Activated CD8-positive, alpha-beta T cell treated with anti-CD3 and anti-CD28 coated beads for 36 hours (primary cell): ENCODE measurements at regions of chr5 and their contacts with region 1.

Region 1: GRCh38 chr5:38441453-38442246 is 114.8 kb downstream of the LIFR start:
- DNase-seq: peak; percentile 91
- ATAC-seq: peak; percentile 100
- H3K4me3 Mint-ChIP-seq: no peak overlapping the region
- H3K27ac Mint-ChIP-seq: no peak overlapping the region
- H3K4me1 Mint-ChIP-seq: no peaks in the 10 kb centered on the region
- H3K27me3 Mint-ChIP-seq: peaks cover 42% of the 10 kb centered on the region
- CTCF ChIP-seq: peak; percentile 90

Region 2: GRCh38 chr5:38453506-38453905 is 11.9 kb after region 1 on chr5:
- CTCF ChIA-PET with region 1: interaction called, 39 read pairs
- POLR2A ChIA-PET with region 1: no interaction called
- intact Hi-C with region 1: no loop called
- DNase-seq: peak; percentile 74
- ATAC-seq: peak; percentile 96
- H3K4me3 Mint-ChIP-seq: no peak overlapping the region
- H3K27ac Mint-ChIP-seq: peak overlapping the region; percentile 31
- H3K4me1 Mint-ChIP-seq: peaks cover 27% of the 10 kb centered on the region
- H3K27me3 Mint-ChIP-seq: peaks cover 71% of the 10 kb centered on the region
- CTCF ChIP-seq: no peak

Region 3: DNA sequence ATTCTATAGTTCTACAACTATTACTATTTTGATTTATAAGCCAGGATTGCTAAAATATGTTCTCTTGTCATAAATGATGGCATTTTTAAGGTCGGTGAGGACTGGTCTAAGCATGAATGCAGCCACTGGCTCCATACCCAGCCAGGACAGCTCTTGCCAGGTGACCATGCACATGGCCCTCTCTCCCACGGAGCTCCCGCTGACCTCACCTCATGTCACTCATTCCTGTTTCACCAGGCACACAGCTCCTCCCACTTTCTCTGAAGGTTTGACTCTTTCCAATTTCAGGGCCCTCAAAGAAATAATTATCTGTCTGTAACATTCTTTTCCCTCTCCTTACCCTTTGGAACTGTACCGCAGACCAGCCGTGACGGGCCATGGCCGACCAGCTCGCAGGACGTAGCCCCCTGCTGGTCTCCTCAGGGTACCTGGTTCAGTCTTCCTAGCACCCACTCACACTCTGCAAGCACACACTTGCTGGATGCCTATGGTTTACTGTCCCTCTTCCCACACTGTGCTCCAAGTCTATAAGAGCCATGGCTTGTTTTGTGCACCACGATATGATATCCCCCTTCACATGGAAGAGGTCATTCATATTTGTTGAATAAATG is 42.2 kb after region 1 on chr5:
- CTCF ChIA-PET with region 1: interaction called, 13 read pairs
- POLR2A ChIA-PET with region 1: interaction called, 3 read pairs
- intact Hi-C with region 1: no loop called
- DNase-seq: no peak
- ATAC-seq: no peak
- H3K4me3 Mint-ChIP-seq: no peak overlapping the region
- H3K27ac Mint-ChIP-seq: no peak overlapping the region
- H3K4me1 Mint-ChIP-seq: no peaks in the 10 kb centered on the region
- H3K27me3 Mint-ChIP-seq: peaks cover 43% of the 10 kb centered on the region
- CTCF ChIP-seq: no peak

Region 4: DNA sequence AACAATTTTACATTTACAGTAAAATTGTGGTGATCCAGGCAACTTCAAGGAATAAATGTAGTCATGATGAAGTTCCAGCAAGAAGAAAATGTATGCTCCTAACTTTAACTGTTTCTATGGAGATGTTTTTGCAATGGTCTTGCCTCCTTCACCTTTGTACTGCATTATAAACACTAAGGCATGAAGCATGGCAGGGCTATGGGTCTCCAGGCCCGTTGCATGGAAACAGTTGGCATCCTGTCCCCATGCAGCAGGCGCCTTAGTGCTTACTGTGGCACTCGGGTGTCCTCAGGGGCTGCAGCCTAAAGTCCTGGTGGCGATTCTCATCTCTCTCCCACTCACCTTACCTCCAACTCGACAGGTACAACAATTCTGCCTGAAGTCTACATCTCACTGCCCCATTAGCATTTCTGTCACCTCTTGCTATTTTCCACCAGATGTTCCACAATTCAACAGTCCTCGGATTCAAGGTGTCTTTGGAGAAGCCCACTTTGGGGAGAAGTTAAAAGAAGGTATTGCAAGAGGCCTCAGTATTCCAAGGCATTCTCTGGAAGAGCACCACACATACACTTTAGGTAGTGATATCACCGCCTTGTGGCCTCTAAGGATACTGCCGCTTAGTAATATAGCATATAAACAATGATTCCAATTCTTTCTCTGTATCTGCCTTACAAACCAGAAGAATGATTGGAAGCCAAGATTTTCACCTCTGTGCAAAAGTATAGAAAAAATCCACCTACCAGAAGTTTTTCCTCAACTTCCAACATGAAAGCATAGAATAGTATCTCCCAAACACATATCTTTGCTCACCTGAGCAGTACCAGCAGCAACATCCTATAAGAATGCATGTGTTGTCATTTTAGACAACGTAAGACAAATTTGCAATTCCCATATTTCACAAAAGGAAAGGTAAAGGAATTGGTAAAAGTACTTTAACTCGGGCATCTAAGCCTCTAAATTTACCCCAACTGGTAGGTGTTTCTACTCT is 109.7 kb after region 1 on chr5:
- CTCF ChIA-PET with region 1: interaction called, 21 read pairs
- POLR2A ChIA-PET with region 1: no interaction called
- intact Hi-C with region 1: loop called (anchors 5 kb)
- DNase-seq: peak; percentile 7
- ATAC-seq: peak; percentile 51
- H3K4me3 Mint-ChIP-seq: no peak overlapping the region
- H3K27ac Mint-ChIP-seq: no peak overlapping the region
- H3K4me1 Mint-ChIP-seq: peaks cover 5% of the 10 kb centered on the region
- H3K27me3 Mint-ChIP-seq: peaks cover 40% of the 10 kb centered on the region
- CTCF ChIP-seq: peak; percentile 61

Region 5: GRCh38 chr5:38809388-38810359 is 368.0 kb after region 1 on chr5:
- CTCF ChIA-PET with region 1: interaction called, 94 read pairs
- POLR2A ChIA-PET with region 1: interaction called, 5 read pairs
- intact Hi-C with region 1: loop called (anchors 2 kb)
- DNase-seq: peak; percentile 77
- ATAC-seq: peak; percentile 69
- H3K4me3 Mint-ChIP-seq: no peak overlapping the region
- H3K27ac Mint-ChIP-seq: no peak overlapping the region
- H3K4me1 Mint-ChIP-seq: peaks cover 8% of the 10 kb centered on the region
- H3K27me3 Mint-ChIP-seq: peaks cover 27% of the 10 kb centered on the region
- CTCF ChIP-seq: peak; percentile 77